Body of pancreas (tissue), 4 donors: ENCODE measurements at regions of chr14 and their contacts with region 1.

Region 1: GRCh38 chr14:94136575-94137331 is 7.3 kb upstream of the IFI27L2 start:
- DNase-seq: peak; percentile 89 to 94 (median 90)
- ATAC-seq: peak; percentile 93
- H3K4me3 ChIP-seq: no peak overlapping the region
- H3K27ac ChIP-seq: no peak overlapping the region
- H3K4me1 ChIP-seq: no peaks in the 10 kb centered on the region
- H3K27me3 ChIP-seq: no peaks in the 10 kb centered on the region
- CTCF ChIP-seq: peak; percentile 92 to 98 (median 95)
- POLR2A ChIP-seq: no peak

Region 2: GRCh38 chr14:94031161-94031882 is 105.4 kb before region 1 on chr14:
- intact Hi-C with region 1: loop called (anchors 5 kb)
- DNase-seq: no peak
- ATAC-seq: no peak
- H3K4me3 ChIP-seq: no peak overlapping the region
- H3K27ac ChIP-seq: no peak overlapping the region
- H3K4me1 ChIP-seq: peaks cover 9% of the 10 kb centered on the region
- H3K27me3 ChIP-seq: no peaks in the 10 kb centered on the region
- CTCF ChIP-seq: no peak
- POLR2A ChIP-seq: no peak